ENCODE measurements at regions of chr18 and their contacts with region 1.

Region 1: GRCh38 chr18:8988261-8988871 is 114.1 kb upstream of the NDUFV2 start:
- DNase-seq: peak; percentile 55 to 80
- ATAC-seq: peak; percentile 70
- H3K4me3 ChIP-seq: no peak overlapping the region
- H3K27ac ChIP-seq: no peak overlapping the region
- H3K4me1 ChIP-seq: peaks cover 0 to 2% of the 10 kb centered on the region in 2 donors
- H3K27me3 ChIP-seq: no peaks in the 10 kb centered on the region

Region 2: DNA sequence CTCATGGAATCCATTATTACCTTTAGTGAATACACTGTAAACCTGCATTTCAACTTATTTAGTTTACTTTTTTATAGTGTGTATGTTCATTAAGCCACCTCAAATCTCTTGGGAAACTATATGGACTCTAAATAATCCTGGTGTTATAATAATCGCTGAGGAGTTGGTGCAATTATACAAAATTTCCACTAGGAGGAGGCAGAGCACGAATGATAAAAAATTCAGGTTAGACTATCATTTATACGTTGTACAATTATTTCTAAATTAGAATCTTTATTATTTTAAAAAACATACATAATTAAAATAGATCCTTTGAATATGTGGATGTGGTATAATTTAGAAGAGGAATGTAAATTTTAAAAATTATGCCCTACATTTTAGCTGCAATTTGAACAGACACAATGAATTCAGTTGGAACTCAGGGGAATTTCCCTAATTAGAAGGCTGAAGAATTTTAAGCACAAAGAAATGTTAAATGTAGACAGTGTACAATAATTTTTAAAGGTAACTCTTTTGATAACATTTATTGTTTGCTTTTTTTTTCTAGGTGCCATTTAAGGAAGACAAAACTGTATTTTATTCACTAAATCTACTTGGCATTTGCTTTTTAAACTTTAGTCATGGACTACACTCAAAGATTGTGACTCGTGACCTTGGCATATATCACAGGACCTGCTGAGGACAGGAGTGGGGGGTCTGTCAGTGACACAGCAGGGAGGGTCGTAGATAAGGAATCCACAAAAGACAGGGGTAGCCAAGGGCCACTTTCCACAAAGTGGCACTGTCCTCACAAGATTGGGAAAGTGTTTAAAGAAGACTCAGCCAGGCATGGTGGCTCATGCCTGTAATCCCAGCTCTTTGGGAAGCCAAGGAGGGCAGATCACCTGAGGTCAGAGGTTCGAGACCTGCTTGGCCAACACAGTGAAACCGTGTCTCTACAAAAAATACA is 333.6 kb before region 1 on chr18:
- intact Hi-C with region 1: loop called (anchors 2 kb)
- DNase-seq: no peak
- ATAC-seq: no peak
- H3K4me3 ChIP-seq: no peak overlapping the region
- H3K27ac ChIP-seq: no peak overlapping the region
- H3K4me1 ChIP-seq: no peaks in the 10 kb centered on the region
- H3K27me3 ChIP-seq: no peaks in the 10 kb centered on the region

Region 3: GRCh38 chr18:8696749-8697211 is 291.6 kb before region 1 on chr18:
- intact Hi-C with region 1: loop called (anchors 1 to 2 kb)
- DNase-seq: peak; percentile 71 to 92
- ATAC-seq: peak; percentile 95
- H3K4me3 ChIP-seq: no peak overlapping the region
- H3K27ac ChIP-seq: no peak overlapping the region
- H3K4me1 ChIP-seq: no peaks in the 10 kb centered on the region
- H3K27me3 ChIP-seq: no peaks in the 10 kb centered on the region

Region 4: GRCh38 chr18:8948471-8949149 is 39.8 kb before region 1 on chr18:
- intact Hi-C with region 1: no loop called
- DNase-seq: no peak
- ATAC-seq: no peak
- H3K4me3 ChIP-seq: no peak overlapping the region
- H3K27ac ChIP-seq: no peak overlapping the region
- H3K4me1 ChIP-seq: no peaks in the 10 kb centered on the region
- H3K27me3 ChIP-seq: no peaks in the 10 kb centered on the region

Measured in aorta (tissue), 5 donors.